Colonic mucosa (tissue), 4 donors: ENCODE measurements at regions of chr4 and their contacts with region 1.

Region 1: GRCh38 chr4:40916880-40917279 is 167.1 kb downstream of the NSUN7 start:
- DNase-seq: peak; percentile 56
- H3K4me3 ChIP-seq: no peak overlapping the region
- H3K27ac ChIP-seq: no peak overlapping the region
- H3K4me1 ChIP-seq: no peaks in the 10 kb centered on the region
- H3K27me3 ChIP-seq: no peaks in the 10 kb centered on the region
- CTCF ChIP-seq: peak; percentile 22

Region 2: DNA sequence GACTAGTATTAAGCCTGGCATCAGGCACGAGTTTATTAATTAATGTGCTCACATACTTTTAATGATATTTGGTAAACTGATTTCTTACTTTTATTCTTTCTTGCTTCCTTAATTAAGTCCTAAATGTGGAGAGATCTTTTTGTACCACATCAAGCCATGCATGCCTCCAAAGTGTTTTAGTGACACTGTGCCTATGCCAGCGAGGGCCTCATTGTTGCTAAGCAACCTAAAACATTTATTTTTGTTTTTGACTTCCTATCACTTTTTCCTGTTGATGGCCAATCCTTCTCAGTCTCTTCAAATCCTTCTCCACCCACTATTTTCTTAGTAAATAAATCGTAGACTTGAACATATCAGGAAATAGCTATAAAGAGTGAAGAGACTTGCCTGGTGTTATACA is 172.7 kb before region 1 on chr4:
- intact Hi-C with region 1: loop called (anchors 5 kb)
- DNase-seq: no peak
- H3K4me3 ChIP-seq: no peak overlapping the region
- H3K27ac ChIP-seq: no peak overlapping the region
- H3K4me1 ChIP-seq: no peaks in the 10 kb centered on the region
- H3K27me3 ChIP-seq: no peaks in the 10 kb centered on the region
- CTCF ChIP-seq: no peak